ENCODE measurements at regions of chr15 and their contacts with region 1.

Region 1: GRCh38 chr15:69058830-69059556 is 44.5 kb downstream of the NOX5 start:
- DNase-seq: peak; percentile 48 to 75
- ATAC-seq: peak; percentile 88
- H3K4me3 ChIP-seq: peak overlapping the region in 2 of 4 donors; percentile 9 to 17
- H3K27ac ChIP-seq: peak overlapping the region in 1 of 4 donors; percentile 46
- H3K4me1 ChIP-seq: peaks cover 9 to 14% of the 10 kb centered on the region in 2 donors
- H3K27me3 ChIP-seq: no peaks in the 10 kb centered on the region
- CTCF ChIP-seq: peak; percentile 85 to 89 (median 87)
- POLR2A ChIP-seq: no peak

Region 2: GRCh38 chr15:68868296-68868695 is 190.7 kb before region 1 on chr15:
- in situ Hi-C with region 1: no loop called
- intact Hi-C with region 1: no loop called
- DNase-seq: no peak
- ATAC-seq: no peak
- H3K4me3 ChIP-seq: no peak overlapping the region
- H3K27ac ChIP-seq: no peak overlapping the region
- H3K4me1 ChIP-seq: no peaks in the 10 kb centered on the region
- H3K27me3 ChIP-seq: peaks cover 0 to 3% (median 0%) of the 10 kb centered on the region in 3 donors
- CTCF ChIP-seq: no peak
- POLR2A ChIP-seq: no peak

Region 3: GRCh38 chr15:68972201-68973065 is 86.6 kb before region 1 on chr15:
- in situ Hi-C with region 1: no loop called
- intact Hi-C with region 1: no loop called
- DNase-seq: no peak
- ATAC-seq: no peak
- H3K4me3 ChIP-seq: no peak overlapping the region
- H3K27ac ChIP-seq: no peak overlapping the region
- H3K4me1 ChIP-seq: no peaks in the 10 kb centered on the region
- H3K27me3 ChIP-seq: peaks cover 0 to 4% (median 0%) of the 10 kb centered on the region in 3 donors
- CTCF ChIP-seq: no peak
- POLR2A ChIP-seq: no peak

Region 4: DNA sequence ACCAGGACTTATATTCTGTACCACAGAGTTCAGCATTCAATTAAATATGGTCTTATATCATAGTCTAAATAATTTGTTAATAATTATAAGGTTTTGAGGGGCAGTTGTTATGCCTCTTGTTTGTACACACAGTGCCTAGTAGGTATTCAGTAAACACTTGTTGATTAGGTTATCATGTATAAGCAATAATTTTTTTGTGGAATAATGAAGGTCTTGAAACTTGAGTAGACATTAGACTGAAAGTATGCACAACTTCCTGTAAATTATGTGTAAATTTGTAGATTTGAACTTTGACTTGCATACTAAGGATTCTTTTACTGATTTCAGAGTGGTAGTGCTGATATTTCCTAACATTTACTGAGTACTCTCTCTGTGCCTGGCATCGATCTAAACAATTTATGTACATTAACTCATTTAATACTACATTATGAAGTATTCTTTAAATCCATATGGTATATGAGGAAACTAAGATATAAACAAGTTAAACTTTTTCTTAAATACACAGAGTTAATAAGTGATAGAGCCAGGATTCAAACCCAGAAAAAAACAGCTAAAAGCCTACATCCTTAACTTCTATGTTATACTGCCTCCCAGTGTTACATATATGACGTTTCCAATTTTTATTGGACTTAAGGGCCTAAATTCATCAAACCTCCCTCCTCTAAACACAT is 166.5 kb after region 1 on chr15:
- in situ Hi-C with region 1: no loop called
- intact Hi-C with region 1: loop called (anchors 1 kb)
- DNase-seq: no peak
- ATAC-seq: no peak
- H3K4me3 ChIP-seq: no peak overlapping the region
- H3K27ac ChIP-seq: no peak overlapping the region
- H3K4me1 ChIP-seq: peaks cover 0 to 11% of the 10 kb centered on the region in 2 donors
- H3K27me3 ChIP-seq: no peaks in the 10 kb centered on the region
- CTCF ChIP-seq: peak in 1 of 5 experiments; percentile 26
- POLR2A ChIP-seq: no peak

Region 5: DNA sequence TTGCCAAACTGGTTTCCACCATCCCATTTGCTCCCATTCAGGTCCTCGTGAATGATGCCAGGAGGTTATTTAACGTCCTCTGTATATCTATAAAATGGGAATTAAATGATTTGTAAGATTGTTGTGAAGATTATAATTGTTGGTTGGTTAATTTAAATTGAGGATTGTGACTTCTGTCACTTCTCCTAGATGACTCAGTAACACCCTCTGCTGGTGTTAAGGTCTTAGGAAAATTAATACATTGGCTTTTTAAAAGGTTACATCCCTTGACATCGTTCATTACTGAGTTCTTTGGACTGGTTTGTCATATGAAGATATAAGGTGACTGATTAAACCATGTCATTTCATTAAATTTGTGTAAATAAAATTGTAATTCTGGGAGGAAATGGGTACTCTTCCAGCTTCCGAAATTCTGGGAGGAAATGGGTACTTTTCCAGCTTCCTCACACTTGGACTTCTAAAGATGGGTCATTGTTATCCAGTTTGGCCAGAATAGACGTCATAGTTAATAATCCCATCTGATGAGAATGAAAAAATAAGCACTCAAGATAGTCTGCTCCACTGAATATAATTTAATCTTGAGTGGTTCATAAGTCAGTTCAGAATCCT is 206.5 kb after region 1 on chr15:
- in situ Hi-C with region 1: loop called (anchors 5 to 25 kb)
- intact Hi-C with region 1: loop called (anchors 1 kb)
- DNase-seq: no peak
- ATAC-seq: no peak
- H3K4me3 ChIP-seq: no peak overlapping the region
- H3K27ac ChIP-seq: no peak overlapping the region
- H3K4me1 ChIP-seq: no peaks in the 10 kb centered on the region
- H3K27me3 ChIP-seq: no peaks in the 10 kb centered on the region
- CTCF ChIP-seq: peak; percentile 24 to 57 (median 36)
- POLR2A ChIP-seq: no peak

Region 6: GRCh38 chr15:69394556-69395282 is 335.7 kb after region 1 on chr15:
- in situ Hi-C with region 1: loop called in 1 of 4 experiments (anchors 5 kb)
- intact Hi-C with region 1: loop called (anchors 1 kb)
- DNase-seq: peak; percentile 25 to 51
- ATAC-seq: peak; percentile 66 to 79
- H3K4me3 ChIP-seq: no peak overlapping the region
- H3K27ac ChIP-seq: no peak overlapping the region
- H3K4me1 ChIP-seq: no peaks in the 10 kb centered on the region
- H3K27me3 ChIP-seq: no peaks in the 10 kb centered on the region
- CTCF ChIP-seq: peak; percentile 71 to 96 (median 88)
- POLR2A ChIP-seq: no peak

Region 7: DNA sequence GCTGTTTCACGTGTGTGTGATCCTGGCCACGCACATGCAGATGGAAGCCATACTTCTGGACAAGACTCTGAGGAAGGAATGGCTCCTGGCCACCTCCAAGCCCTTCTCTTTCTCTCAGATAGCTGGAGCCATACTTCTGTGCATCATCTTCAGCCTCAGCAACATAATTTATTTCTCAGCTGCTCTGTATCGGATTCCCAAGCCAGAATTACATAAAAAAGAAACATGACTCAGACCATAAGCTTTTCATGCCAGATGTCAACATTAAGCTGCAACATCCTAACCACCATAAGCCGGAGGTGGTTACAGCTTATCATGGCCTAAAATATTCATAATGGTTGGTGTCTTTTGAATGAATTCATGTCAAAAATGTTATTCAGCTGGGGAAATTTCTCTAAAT is 344.6 kb after region 1 on chr15:
- in situ Hi-C with region 1: loop called in 3 of 4 experiments (anchors 5 to 10 kb)
- intact Hi-C with region 1: no loop called
- DNase-seq: no peak
- ATAC-seq: peak; percentile 72 to 73
- H3K4me3 ChIP-seq: no peak overlapping the region
- H3K27ac ChIP-seq: no peak overlapping the region
- H3K4me1 ChIP-seq: no peaks in the 10 kb centered on the region
- H3K27me3 ChIP-seq: no peaks in the 10 kb centered on the region
- CTCF ChIP-seq: no peak
- POLR2A ChIP-seq: no peak

Region 8: DNA sequence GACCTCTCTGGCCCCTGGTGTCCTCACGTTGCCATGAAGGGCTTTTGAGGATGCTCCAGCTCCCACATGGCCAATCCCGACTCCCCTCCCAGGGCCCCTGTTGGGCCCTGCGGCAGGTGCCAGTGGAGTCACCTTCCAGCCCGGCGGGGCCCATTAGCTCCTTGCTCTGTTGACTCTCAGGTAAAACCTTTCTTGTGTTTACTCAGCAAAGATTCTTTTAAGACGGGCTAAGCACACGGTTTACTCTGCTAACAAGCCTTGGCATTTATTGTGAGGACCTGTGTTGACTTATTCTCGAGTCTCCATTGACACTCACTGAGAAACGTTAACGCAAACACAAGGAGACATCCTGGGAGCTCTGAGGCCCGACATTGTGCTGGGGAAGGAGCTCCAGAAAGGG is 408.7 kb after region 1 on chr15:
- in situ Hi-C with region 1: no loop called
- intact Hi-C with region 1: loop called (anchors 2 kb)
- DNase-seq: no peak
- ATAC-seq: no peak
- H3K4me3 ChIP-seq: no peak overlapping the region
- H3K27ac ChIP-seq: no peak overlapping the region
- H3K4me1 ChIP-seq: peaks cover 7 to 8% of the 10 kb centered on the region in 2 donors
- H3K27me3 ChIP-seq: no peaks in the 10 kb centered on the region
- CTCF ChIP-seq: no peak
- POLR2A ChIP-seq: no peak